PC-9 (cell line): ENCODE measurements at regions of chr20 and their contacts with region 1.

Region 1: DNA sequence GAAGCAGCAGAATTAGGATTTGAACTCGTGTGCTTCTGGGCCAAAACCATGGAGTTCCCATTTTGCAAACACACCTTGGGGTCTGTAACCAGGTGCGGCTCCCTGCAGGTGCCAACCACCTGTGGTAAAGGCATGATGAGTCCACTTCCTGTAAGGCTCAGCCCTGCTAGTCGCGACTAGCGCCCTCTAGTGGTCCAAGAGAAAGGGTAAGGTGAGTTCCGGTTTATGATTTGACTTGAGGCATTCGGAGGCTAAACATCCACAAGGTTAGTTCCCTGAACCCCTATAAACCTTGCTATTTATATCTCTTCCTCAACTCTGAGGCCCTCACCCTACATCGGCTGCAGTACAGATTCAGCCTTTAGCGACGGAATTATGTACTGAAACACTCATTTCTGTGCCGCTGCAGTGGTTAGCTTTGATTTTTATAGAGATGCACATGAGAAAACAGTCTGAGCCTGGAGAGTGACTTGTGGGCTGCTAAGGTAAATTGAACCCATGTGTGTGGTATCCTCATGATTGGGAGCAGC is 173.4 kb downstream of the PLCB1 start:
- DNase-seq: peak in 1 of 2 experiments; percentile 10
- H3K4me3 ChIP-seq: no peak overlapping the region
- H3K27ac ChIP-seq: no peak overlapping the region
- H3K4me1 ChIP-seq: no peaks in the 10 kb centered on the region
- H3K27me3 ChIP-seq: no peaks in the 10 kb centered on the region
- CTCF ChIP-seq: peak; percentile 74

Region 2: GRCh38 chr20:7935027-7935551 is 370.4 kb before region 1 on chr20:
- CTCF ChIA-PET with region 1: interaction called, 6 read pairs
- POLR2A ChIA-PET with region 1: no interaction called
- intact Hi-C with region 1: loop called (anchors 10 kb)
- DNase-seq: no peak
- H3K4me3 ChIP-seq: no peak overlapping the region
- H3K27ac ChIP-seq: no peak overlapping the region
- H3K4me1 ChIP-seq: no peaks in the 10 kb centered on the region
- H3K27me3 ChIP-seq: no peaks in the 10 kb centered on the region; the same call in 1 of the 2 replicates
- CTCF ChIP-seq: no peak

Region 3: DNA sequence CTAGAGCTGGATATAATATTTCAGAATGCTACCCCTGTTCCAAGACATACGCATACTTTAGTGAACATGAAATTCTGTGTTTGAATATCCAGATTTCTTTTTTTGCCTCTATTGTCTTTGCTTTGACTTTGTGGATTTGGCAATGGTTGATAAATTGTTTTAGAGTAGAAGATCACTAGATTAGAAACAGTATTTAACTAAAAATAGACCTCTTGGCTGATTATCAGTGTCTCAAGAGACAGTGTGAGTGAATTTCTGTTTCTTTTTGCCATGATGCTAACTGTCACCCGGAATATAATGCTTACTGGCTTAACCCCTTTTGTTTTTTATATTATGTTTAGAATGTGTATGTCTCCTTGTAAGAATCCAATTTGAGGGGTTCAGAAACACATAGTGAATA is 70.9 kb before region 1 on chr20:
- CTCF ChIA-PET with region 1: no interaction called
- POLR2A ChIA-PET with region 1: no interaction called
- intact Hi-C with region 1: no loop called
- DNase-seq: no peak
- H3K4me3 ChIP-seq: no peak overlapping the region
- H3K27ac ChIP-seq: no peak overlapping the region
- H3K4me1 ChIP-seq: no peaks in the 10 kb centered on the region
- H3K27me3 ChIP-seq: no peaks in the 10 kb centered on the region
- CTCF ChIP-seq: no peak